Vagina (tissue), 2 donors: ENCODE measurements at regions of chr11 and their contacts with region 1.

Region 1: GRCh38 chr11:126197277-126197939 is 14.0 kb downstream of the RPUSD4 start:
- DNase-seq: no peak
- H3K4me3 ChIP-seq: no peak overlapping the region
- H3K27ac ChIP-seq: no peak overlapping the region
- H3K4me1 ChIP-seq: no peaks in the 10 kb centered on the region
- H3K27me3 ChIP-seq: no peaks in the 10 kb centered on the region
- CTCF ChIP-seq: no peak
- POLR2A ChIP-seq: no peak

Region 2: DNA sequence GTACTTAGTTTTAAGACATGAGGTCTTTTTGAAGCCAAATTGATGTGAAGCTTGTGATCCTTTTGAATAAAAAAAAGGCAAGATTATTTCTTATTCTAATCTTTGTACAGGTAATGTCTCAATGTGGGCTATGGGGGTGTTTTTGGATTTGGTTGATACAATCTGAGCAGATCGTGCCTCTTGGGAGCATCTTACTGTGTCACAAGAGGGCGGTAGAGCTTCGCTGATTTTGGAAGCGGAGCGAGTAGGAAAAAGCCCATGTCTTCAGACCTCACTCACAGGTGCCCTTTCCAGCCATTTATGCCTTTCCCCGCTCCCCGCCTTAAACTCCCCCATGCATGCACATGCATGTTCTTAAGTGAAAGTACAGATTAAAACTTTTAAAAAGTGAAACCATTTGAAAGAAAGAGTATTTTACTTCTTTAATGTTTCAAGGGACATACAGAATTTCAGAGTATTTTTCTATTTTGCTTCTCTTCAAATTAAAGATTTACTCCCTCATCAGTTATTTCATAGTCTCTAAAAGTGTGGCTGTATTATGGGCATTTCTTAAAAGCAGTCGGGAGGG is 274.3 kb before region 1 on chr11:
- intact Hi-C with region 1: loop called (anchors 5 kb)
- DNase-seq: peak in 1 of 2 donors; percentile 79
- H3K4me3 ChIP-seq: no peak overlapping the region
- H3K27ac ChIP-seq: no peak overlapping the region
- H3K4me1 ChIP-seq: no peaks in the 10 kb centered on the region
- H3K27me3 ChIP-seq: no peaks in the 10 kb centered on the region
- CTCF ChIP-seq: peak; percentile 70 to 89 (median 81)
- POLR2A ChIP-seq: no peak